ENCODE measurements at regions of chr17 and their contacts with region 1.

Region 1: GRCh38 chr17:75679706-75680442 is 12.7 kb downstream of the SAP30BP start:
- DNase-seq: peak; percentile 89
- H3K4me3 ChIP-seq: no peak overlapping the region
- H3K27ac ChIP-seq: peak overlapping the region; percentile 42
- H3K4me1 ChIP-seq: peaks cover 46% of the 10 kb centered on the region
- H3K27me3 ChIP-seq: no peaks in the 10 kb centered on the region
- CTCF ChIP-seq: peak; percentile 33 to 39
- POLR2A ChIP-seq: no peak

Region 2: DNA sequence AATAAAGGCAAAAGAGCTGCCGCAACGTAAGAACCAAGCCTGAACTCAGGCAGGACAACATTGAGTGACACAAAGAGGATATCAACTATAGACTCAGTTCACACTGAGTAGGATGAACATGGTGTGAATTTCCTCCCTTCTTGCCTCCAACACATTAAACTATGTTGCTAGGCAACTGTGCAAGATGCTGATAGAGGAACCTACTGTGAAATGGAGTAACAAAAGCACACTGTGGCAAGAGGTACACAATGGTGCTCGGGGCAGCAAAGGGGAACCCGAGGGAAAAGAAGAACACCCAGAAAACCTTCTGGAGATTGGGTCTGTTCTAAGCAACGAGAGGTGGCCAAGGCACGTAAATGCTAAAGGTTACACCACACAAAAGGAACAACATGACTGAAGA is 308.5 kb before region 1 on chr17:
- CTCF ChIA-PET with region 1: no interaction called
- POLR2A ChIA-PET with region 1: no interaction called
- dilution Hi-C with region 1: no loop called
- intact Hi-C with region 1: no loop called
- DNase-seq: no peak
- H3K4me3 ChIP-seq: no peak overlapping the region
- H3K27ac ChIP-seq: no peak overlapping the region
- H3K4me1 ChIP-seq: peaks cover 1% of the 10 kb centered on the region
- H3K27me3 ChIP-seq: no peaks in the 10 kb centered on the region
- CTCF ChIP-seq: no peak
- POLR2A ChIP-seq: no peak

Region 3: DNA sequence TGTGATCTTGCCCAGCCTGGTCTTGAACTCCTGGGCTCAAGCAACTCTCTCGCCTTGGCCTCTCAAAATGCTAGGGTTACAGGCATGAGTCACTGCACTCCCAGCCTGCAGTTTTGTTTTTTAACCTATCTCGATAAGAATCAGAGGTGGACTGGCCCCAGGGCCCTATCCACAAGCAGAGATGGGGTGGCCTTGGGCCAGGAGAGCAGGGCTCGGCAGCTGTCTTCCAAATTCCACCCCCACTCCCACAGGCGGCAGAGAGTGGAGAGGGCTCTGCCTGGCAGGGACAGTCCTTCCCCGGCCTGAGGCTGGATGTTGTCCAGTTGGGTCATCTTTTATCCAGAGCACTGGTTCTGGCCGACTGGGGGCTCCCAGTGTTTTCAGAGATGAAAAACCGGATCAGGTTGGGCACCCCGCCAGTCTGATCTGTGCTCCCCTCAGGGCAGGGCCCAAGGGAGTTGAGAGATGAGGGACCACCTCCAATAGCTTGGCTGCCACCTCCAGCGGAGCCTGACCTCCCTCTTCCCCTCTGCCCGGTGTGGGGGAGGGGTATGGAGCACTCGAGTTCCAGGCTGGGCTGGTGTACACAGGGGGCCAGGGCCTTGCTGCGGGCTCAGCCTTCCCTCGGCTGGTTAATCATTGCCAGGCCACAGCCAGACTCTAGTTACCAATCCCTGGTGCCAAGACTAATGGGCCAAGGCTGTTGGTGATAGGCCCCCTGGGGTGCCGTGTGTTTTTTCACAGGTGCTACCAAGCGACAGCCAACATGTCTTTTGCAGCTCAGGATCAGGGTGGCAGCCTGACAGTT is 122.6 kb before region 1 on chr17:
- CTCF ChIA-PET with region 1: no interaction called
- POLR2A ChIA-PET with region 1: no interaction called
- dilution Hi-C with region 1: no loop called
- intact Hi-C with region 1: no loop called
- DNase-seq: no peak
- H3K4me3 ChIP-seq: no peak overlapping the region
- H3K27ac ChIP-seq: no peak overlapping the region
- H3K4me1 ChIP-seq: no peaks in the 10 kb centered on the region
- H3K27me3 ChIP-seq: no peaks in the 10 kb centered on the region
- CTCF ChIP-seq: no peak
- POLR2A ChIP-seq: no peak

Region 4: GRCh38 chr17:75571197-75571873 is 108.5 kb before region 1 on chr17:
- CTCF ChIA-PET with region 1: no interaction called
- POLR2A ChIA-PET with region 1: no interaction called
- dilution Hi-C with region 1: no loop called
- intact Hi-C with region 1: no loop called
- DNase-seq: peak; percentile 21
- H3K4me3 ChIP-seq: no peak overlapping the region
- H3K27ac ChIP-seq: peak overlapping the region; percentile 60
- H3K4me1 ChIP-seq: peaks cover 9% of the 10 kb centered on the region
- H3K27me3 ChIP-seq: no peaks in the 10 kb centered on the region
- CTCF ChIP-seq: no peak
- POLR2A ChIP-seq: no peak

Region 5: DNA sequence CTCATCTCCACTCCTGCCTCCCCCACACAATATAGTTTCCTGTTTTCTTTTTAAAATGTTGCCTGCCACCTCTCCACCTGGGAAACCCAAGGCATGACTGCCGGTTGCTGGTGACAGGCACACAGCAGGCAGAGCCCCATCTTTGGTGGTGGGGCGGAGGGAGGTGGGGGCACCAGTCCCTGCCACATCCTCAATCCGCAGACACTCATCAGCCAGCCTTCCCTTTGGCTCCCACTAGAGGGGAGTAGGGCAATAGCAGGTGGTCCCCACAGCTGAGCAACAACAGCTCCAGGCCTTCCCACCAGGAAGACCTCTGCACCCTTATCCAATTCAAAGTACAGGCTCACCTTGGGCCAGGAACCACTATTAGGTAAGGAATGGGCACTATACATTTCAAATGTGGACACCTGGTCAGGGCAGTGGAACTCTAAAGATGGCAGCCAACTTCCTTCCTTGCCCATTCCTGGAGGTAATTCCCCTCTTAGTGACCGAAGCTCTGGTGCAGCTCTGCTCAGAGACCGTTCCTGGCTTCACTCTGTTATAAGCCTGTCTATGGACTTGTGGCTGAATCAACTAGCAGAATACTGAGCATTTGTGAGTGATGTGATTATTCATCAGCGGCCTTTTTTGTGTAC is 26.8 kb before region 1 on chr17:
- CTCF ChIA-PET with region 1: interaction called, 16 read pairs
- POLR2A ChIA-PET with region 1: interaction called, 4 read pairs
- dilution Hi-C with region 1: no loop called
- intact Hi-C with region 1: no loop called
- DNase-seq: peak; percentile 56
- H3K4me3 ChIP-seq: no peak overlapping the region
- H3K27ac ChIP-seq: no peak overlapping the region
- H3K4me1 ChIP-seq: peaks cover 8% of the 10 kb centered on the region
- H3K27me3 ChIP-seq: no peaks in the 10 kb centered on the region
- CTCF ChIP-seq: peak; percentile 77 to 86
- POLR2A ChIP-seq: no peak

Region 6: GRCh38 chr17:75693500-75694481 is 13.9 kb after region 1 on chr17:
- CTCF ChIA-PET with region 1: interaction called, 88 read pairs
- POLR2A ChIA-PET with region 1: interaction called, 3 read pairs
- dilution Hi-C with region 1: no loop called
- intact Hi-C with region 1: no loop called
- DNase-seq: peak; percentile 78
- H3K4me3 ChIP-seq: no peak overlapping the region
- H3K27ac ChIP-seq: peak overlapping the region; percentile 80
- H3K4me1 ChIP-seq: peaks cover 72% of the 10 kb centered on the region
- H3K27me3 ChIP-seq: no peaks in the 10 kb centered on the region
- CTCF ChIP-seq: peak; percentile 3 to 16
- POLR2A ChIP-seq: peak; percentile 63

Region 7: DNA sequence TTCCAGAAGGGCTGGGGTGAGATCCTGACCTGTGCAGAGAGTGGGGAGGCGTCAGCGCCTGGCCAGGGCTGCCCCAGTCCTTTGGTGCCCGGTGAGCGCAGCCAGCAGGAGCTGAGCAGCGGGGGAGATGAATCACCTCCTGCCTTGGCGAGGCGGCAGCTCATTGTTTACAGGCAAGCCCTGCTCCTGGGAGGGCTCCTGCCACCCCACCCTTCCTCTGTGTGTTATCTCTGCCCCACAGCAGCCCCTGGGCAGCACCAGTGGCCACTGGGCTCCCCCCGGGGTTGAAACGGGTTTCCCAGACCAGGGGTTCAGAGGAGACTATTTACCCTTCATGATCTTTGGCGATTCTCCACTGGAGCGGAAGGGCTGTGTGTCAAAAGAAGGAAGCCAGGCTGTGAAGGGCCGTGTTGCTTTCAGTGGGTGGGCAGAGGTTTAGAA is 27.3 kb after region 1 on chr17:
- CTCF ChIA-PET with region 1: interaction called, 59 read pairs
- POLR2A ChIA-PET with region 1: no interaction called
- dilution Hi-C with region 1: no loop called
- intact Hi-C with region 1: loop called (anchors 1 kb)
- DNase-seq: peak; percentile 97
- H3K4me3 ChIP-seq: no peak overlapping the region
- H3K27ac ChIP-seq: peak overlapping the region; percentile 70
- H3K4me1 ChIP-seq: peaks cover 32% of the 10 kb centered on the region
- H3K27me3 ChIP-seq: no peaks in the 10 kb centered on the region
- CTCF ChIP-seq: no peak
- POLR2A ChIP-seq: peak; percentile 72

Region 8: DNA sequence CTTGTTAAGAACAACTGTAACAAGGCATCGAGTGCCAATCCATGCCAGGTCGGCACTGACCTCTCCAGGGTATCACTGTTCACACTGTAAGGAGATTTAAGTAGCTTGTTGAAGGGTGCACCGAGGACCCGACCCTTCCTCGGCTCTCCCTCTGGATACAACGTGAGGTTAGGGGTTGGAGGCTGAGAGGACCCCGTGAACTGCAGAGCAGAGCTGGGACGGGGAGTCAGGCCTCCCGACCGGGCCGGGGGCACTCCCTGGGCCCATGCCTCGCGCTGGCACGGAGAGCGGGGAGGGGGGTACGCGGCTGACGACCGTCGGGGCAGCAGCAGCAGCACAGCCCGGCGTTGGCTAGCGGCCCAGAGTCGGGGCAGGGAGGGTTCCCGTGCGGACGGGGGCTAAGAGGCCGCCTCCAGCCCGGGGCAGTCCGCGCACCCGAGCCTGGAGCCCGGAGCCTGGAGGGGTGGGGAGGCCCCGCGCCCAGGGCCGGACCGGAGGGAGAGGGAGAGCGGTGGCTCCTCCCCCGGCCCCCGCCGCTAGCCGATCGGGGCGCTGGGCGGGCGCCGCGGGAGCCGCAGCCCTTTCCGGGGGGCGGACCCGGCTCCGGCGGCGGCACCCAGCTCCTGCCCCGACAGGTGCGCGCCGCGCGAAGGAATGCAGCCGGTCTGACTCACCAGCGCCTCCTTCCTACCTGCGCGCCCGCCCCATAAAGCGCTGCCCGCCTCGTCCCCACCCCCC is 41.0 kb after region 1 on chr17 and contains the start of gene ITGB4:
- CTCF ChIA-PET with region 1: interaction called, 33 read pairs
- POLR2A ChIA-PET with region 1: no interaction called
- dilution Hi-C with region 1: no loop called
- intact Hi-C with region 1: no loop called
- DNase-seq: peak; percentile 30
- H3K4me3 ChIP-seq: peak within 1 kb of the TSS in 2 of 3 experiments; percentile 6 to 33
- H3K27ac ChIP-seq: no peak within 1 kb of the TSS
- H3K4me1 ChIP-seq: peaks cover 2% of the 10 kb centered on the region
- H3K27me3 ChIP-seq: peaks cover 6 to 11% of the 10 kb centered on the region in 2 experiments
- CTCF ChIP-seq: no peak
- POLR2A ChIP-seq: no peak
- total RNA-seq, gene ITGB4: 4.1 and 4.2 TPM in 2 replicates

Region 9: DNA sequence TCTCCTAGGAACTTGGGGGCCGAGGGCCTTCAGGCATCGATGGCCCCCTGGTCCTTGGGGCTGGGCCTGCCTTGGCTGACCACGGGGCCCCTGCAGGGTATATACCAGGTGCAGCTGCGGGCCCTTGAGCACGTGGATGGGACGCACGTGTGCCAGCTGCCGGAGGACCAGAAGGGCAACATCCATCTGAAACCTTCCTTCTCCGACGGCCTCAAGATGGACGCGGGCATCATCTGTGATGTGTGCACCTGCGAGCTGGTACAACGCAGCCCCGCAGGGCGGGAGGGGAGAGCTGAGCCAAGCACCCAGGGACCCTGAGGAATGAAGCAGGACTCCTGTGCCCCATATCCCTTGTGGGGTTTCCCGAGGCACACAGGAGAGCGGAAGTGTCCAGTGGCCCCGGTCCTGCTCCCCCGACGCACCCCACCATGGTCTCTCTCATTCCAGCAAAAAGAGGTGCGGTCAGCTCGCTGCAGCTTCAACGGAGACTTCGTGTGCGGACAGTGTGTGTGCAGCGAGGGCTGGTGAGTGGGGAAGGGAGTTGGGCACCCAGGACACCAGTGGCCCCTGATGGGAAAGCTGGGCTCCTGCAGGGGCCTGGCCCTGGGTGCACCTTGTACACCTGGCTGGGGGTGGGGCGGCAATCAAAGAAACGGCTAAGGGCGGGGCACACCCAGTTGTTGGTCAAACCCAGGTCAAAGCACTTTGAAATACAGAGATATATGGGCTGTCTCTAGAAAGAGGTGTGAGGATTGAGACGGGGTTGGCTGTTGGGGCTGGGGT is 52.0 kb after region 1 on chr17:
- CTCF ChIA-PET with region 1: interaction called, 13 read pairs
- POLR2A ChIA-PET with region 1: interaction called, 4 read pairs
- dilution Hi-C with region 1: no loop called
- intact Hi-C with region 1: no loop called
- DNase-seq: no peak
- H3K4me3 ChIP-seq: no peak overlapping the region
- H3K27ac ChIP-seq: no peak overlapping the region
- H3K4me1 ChIP-seq: no peaks in the 10 kb centered on the region
- H3K27me3 ChIP-seq: no peaks in the 10 kb centered on the region
- CTCF ChIP-seq: no peak
- POLR2A ChIP-seq: no peak

Region 10: DNA sequence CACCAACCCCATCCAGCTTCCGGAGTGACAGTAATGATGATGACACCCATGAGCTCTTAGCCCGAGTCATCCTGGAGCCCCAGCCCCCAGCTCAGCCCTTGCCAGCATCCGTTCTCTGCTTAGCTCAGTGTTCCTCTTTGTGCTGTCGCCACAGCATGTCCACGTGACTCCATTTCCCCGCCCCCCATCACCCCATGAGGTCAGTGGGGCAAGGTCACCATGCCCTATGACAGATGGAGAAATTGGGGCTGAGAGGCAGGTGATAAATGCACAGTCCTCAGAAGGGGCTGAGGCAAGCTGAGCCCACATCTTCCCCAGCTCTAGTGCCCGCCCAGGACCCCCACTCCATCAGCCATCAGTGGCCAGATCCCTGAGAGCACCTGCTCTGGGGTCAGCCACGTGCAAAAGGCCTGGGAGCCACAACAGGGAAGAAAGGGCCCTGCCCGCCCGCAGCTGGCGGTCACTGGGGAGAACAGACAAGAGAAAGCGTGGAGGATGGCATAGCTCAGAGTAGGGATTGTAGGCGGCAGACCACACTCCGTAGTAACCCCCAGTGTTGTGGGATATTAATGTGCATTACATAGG is 58.4 kb after region 1 on chr17:
- CTCF ChIA-PET with region 1: interaction called, 653 read pairs
- POLR2A ChIA-PET with region 1: no interaction called
- dilution Hi-C with region 1: no loop called
- intact Hi-C with region 1: no loop called
- DNase-seq: no peak
- H3K4me3 ChIP-seq: no peak overlapping the region
- H3K27ac ChIP-seq: no peak overlapping the region
- H3K4me1 ChIP-seq: no peaks in the 10 kb centered on the region
- H3K27me3 ChIP-seq: no peaks in the 10 kb centered on the region
- CTCF ChIP-seq: no peak
- POLR2A ChIP-seq: no peak

Measured in endothelial cell of umbilical vein (primary cell).